Mammary epithelial cell (primary cell): ENCODE measurements at regions of chr19 and their contacts with region 1.

Region 1: GRCh38 chr19:54653181-54653809 is 9.5 kb upstream of the LILRB4 start:
- DNase-seq: no peak
- H3K4me3 ChIP-seq: no peak overlapping the region
- H3K27ac ChIP-seq: no peak overlapping the region
- H3K4me1 ChIP-seq: no peaks in the 10 kb centered on the region
- H3K27me3 ChIP-seq: no peaks in the 10 kb centered on the region
- CTCF ChIP-seq: peak; percentile 36 to 48

Region 2: DNA sequence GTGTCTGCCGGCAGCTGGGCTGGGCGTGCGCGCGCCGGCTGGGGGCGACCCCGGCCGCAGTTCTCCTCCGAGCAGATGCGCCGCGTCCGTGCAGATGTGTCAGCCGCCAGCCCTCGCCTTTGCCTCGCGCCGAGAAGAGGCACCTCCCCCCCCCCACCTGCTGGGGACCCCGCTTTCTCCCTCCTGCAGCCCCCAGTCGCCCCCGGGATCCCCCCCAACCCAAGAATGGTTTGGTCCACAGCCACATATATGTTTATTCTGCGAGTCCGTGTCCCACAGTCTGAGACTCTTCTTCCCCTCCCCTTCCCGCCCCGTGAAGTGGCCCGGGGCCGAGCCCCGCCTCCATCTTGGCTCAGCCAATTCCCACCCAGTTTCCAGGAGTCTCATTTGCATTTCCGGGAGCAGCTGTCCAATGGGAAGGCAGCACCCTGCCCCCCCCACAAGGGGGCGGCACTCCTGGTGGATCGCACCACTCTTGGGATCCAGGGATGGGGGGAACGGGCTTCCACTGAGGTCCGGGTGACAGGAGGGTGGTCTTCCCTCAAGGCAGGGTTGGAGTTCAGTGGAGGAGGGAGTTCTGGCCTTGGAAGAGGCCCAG is 799.6 kb after region 1 on chr19:
- CTCF ChIA-PET with region 1: no interaction called
- dilution Hi-C with region 1: no loop called
- in situ Hi-C with region 1: no loop called
- intact Hi-C with region 1: loop called (anchors 5 kb)
- DNase-seq: peak; percentile 40
- H3K4me3 ChIP-seq: no peak overlapping the region
- H3K27ac ChIP-seq: no peak overlapping the region
- H3K4me1 ChIP-seq: peaks cover 12% of the 10 kb centered on the region
- H3K27me3 ChIP-seq: peaks cover 12% of the 10 kb centered on the region
- CTCF ChIP-seq: no peak

Region 3: GRCh38 chr19:55503502-55504251 is 850.4 kb after region 1 on chr19:
- CTCF ChIA-PET with region 1: no interaction called
- dilution Hi-C with region 1: no loop called
- in situ Hi-C with region 1: no loop called
- intact Hi-C with region 1: loop called (anchors 5 kb)
- DNase-seq: peak; percentile 84
- H3K4me3 ChIP-seq: peak overlapping the region; percentile 41 to 46 (median 42)
- H3K27ac ChIP-seq: no peak overlapping the region
- H3K4me1 ChIP-seq: peaks cover 9% of the 10 kb centered on the region
- H3K27me3 ChIP-seq: no peaks in the 10 kb centered on the region
- CTCF ChIP-seq: peak; percentile 78 to 96

Region 4: DNA sequence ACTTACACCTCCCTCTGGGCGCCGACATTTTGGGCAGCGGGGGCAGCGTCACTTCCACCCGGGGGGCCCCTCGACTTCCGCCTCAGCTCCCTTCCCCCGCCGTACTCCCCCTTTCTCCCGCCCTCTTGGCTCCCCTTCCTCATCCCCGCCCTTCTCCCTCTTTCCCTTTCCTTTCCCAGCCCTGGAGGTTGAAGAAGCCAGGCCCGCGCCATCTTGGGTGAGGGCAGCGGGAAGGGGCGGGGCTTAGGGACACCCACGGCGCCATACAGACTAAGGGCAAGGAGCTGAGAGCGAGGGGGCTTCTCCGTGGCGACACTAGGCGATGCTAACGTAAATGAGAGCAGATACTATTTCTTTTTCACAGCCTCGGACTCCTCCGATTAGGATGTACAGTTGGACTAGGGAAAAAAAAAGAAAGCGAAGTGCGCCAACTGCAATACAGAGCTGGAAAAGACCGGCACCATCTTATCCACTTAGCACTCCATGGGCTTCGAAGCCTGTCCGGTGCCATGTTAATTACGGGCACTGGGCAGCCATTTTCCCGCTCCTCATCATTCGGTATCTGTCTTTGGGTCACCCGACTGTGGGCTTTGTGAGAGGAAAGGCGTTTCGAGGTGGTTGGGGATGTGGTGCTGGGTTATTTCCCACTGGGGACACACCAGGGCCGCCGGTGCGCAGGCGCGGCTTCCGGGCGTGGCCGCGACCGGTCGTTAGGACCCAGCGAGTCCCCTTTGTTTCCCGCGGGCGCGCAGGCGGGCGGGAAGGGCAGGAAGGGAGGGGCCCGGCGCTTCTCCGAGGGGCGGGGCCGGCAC is 946.4 kb after region 1 on chr19 and contains the start of gene FIZ1:
- CTCF ChIA-PET with region 1: no interaction called
- dilution Hi-C with region 1: loop called (anchors 25 kb)
- in situ Hi-C with region 1: no loop called
- intact Hi-C with region 1: no loop called
- DNase-seq: peak; percentile 98
- H3K4me3 ChIP-seq: peak within 1 kb of the TSS; percentile 60 to 92 (median 80)
- H3K27ac ChIP-seq: peak within 1 kb of the TSS; percentile 89
- H3K4me1 ChIP-seq: peaks cover 10% of the 10 kb centered on the region
- H3K27me3 ChIP-seq: no peaks in the 10 kb centered on the region
- CTCF ChIP-seq: no peak
- total RNA-seq, gene FIZ1: 5.3 to 13.4 TPM